Naive thymus-derived CD4-positive, alpha-beta T cell (primary cell): ENCODE measurements at regions of chr3 and their contacts with region 1.

Region 1: DNA sequence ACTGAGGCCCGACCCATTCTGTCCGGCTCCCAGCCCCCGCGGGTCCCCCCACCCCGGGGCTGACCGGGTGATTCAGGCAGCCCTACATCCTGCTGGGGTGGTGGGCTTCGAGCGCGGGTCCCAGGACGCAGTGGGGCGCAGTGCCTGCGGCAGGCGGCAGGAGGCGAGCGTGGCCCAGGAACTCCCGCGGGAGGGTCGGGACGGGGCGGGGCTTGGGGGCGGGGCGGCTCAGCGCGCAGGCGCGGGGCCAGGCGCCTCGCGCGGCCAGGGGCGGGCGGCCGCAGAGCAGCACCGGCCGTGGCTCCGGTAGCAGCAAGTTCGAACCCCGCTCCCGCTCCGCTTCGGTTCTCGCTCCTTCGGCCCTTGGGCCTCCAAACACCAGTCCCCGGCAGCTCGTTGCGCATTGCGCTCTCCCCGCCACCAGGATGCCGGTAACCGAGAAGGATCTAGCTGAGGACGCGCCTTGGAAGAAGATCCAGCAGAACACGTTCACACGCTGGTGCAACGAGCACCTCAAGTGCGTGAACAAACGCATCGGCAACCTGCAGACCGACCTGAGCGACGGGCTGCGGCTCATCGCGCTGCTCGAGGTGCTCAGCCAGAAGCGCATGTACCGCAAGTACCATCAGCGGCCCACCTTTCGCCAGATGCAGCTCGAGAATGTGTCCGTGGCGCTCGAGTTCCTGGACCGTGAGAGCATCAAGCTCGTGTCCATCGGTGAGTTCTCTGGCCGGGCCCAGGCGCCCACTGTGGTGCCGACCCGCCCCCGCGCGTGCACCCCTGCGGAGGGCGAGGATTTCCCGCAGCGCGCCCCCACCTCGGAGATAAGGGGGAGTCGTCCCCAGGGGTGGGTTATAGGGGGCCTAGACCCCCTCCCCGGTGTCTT is at the start of gene FLNB:
- DNase-seq: peak; percentile 61 to 83 (median 77)
- ATAC-seq: peak; percentile 95
- H3K4me3 ChIP-seq: peak within 1 kb of the TSS; percentile 100
- H3K4me3 Mint-ChIP-seq: peak within 1 kb of the TSS; percentile 78 to 93 (median 90)
- H3K27ac ChIP-seq: peak within 1 kb of the TSS; percentile 66
- H3K27ac Mint-ChIP-seq: peak within 1 kb of the TSS; percentile 61 to 95 (median 81)
- H3K4me1 ChIP-seq: peaks cover 9 to 32% of the 10 kb centered on the region in 2 donors
- H3K4me1 Mint-ChIP-seq: peaks cover 30 to 42% (median 41%) of the 10 kb centered on the region in 7 donors
- H3K27me3 ChIP-seq: no peaks in the 10 kb centered on the region
- H3K27me3 Mint-ChIP-seq: no peaks in the 10 kb centered on the region
- total RNA-seq, gene FLNB: 39.3 to 66.7 (median 64.9) TPM

Region 2: GRCh38 chr3:58034738-58035523 is 26.5 kb after region 1 on chr3:
- CTCF ChIA-PET with region 1: interaction called, 5 read pairs
- POLR2A ChIA-PET with region 1: no interaction called
- intact Hi-C with region 1: loop called in 1 of 2 experiments (anchors 1 kb)
- DNase-seq: peak in 8 of 9 donors; percentile 41 to 83 (median 69)
- ATAC-seq: peak; percentile 95
- H3K4me3 ChIP-seq: no peak overlapping the region
- H3K4me3 Mint-ChIP-seq: peak overlapping the region; percentile 13 to 74 (median 50)
- H3K27ac ChIP-seq: peak overlapping the region; percentile 48
- H3K27ac Mint-ChIP-seq: peak overlapping the region; percentile 31 to 98 (median 93)
- H3K4me1 ChIP-seq: peaks cover 14 to 15% of the 10 kb centered on the region in 2 donors
- H3K4me1 Mint-ChIP-seq: peaks cover 27 to 84% (median 62%) of the 10 kb centered on the region in 7 donors
- H3K27me3 ChIP-seq: no peaks in the 10 kb centered on the region
- H3K27me3 Mint-ChIP-seq: peaks cover 0 to 2% (median 0%) of the 10 kb centered on the region in 5 donors

Region 3: GRCh38 chr3:58116161-58116955 is 108.0 kb after region 1 on chr3:
- CTCF ChIA-PET with region 1: no interaction called
- POLR2A ChIA-PET with region 1: interaction called, 3 read pairs
- intact Hi-C with region 1: loop called (anchors 1 kb)
- DNase-seq: peak; percentile 20 to 85 (median 72)
- ATAC-seq: peak; percentile 95
- H3K4me3 ChIP-seq: no peak overlapping the region
- H3K4me3 Mint-ChIP-seq: peak overlapping the region; percentile 36 to 72 (median 62)
- H3K27ac ChIP-seq: peak overlapping the region; percentile 46
- H3K27ac Mint-ChIP-seq: peak overlapping the region; percentile 63 to 91 (median 83)
- H3K4me1 ChIP-seq: peaks cover 27 to 28% of the 10 kb centered on the region in 2 donors
- H3K4me1 Mint-ChIP-seq: peaks cover 12 to 45% (median 37%) of the 10 kb centered on the region in 7 donors
- H3K27me3 ChIP-seq: no peaks in the 10 kb centered on the region
- H3K27me3 Mint-ChIP-seq: no peaks in the 10 kb centered on the region

Region 4: GRCh38 chr3:58177747-58178527 is 169.6 kb after region 1 on chr3:
- CTCF ChIA-PET with region 1: interaction called, 22 read pairs
- POLR2A ChIA-PET with region 1: interaction called, 3 read pairs
- intact Hi-C with region 1: loop called (anchors 1 kb)
- DNase-seq: peak; percentile 72 to 92 (median 84)
- ATAC-seq: peak; percentile 94
- H3K4me3 ChIP-seq: peak overlapping the region; percentile 49
- H3K4me3 Mint-ChIP-seq: peak overlapping the region; percentile 51 to 84 (median 74)
- H3K27ac ChIP-seq: no peak overlapping the region
- H3K27ac Mint-ChIP-seq: peak overlapping the region in 3 of 9 donors; percentile 18 to 43 (median 29)
- H3K4me1 ChIP-seq: peaks cover 6 to 8% of the 10 kb centered on the region in 2 donors
- H3K4me1 Mint-ChIP-seq: peaks cover 4 to 17% (median 13%) of the 10 kb centered on the region in 7 donors
- H3K27me3 ChIP-seq: no peaks in the 10 kb centered on the region
- H3K27me3 Mint-ChIP-seq: peaks cover 0 to 4% (median 0%) of the 10 kb centered on the region in 5 donors

Region 5: GRCh38 chr3:58192069-58192468 is 183.7 kb after region 1 on chr3:
- CTCF ChIA-PET with region 1: no interaction called
- POLR2A ChIA-PET with region 1: no interaction called
- intact Hi-C with region 1: no loop called
- DNase-seq: no peak
- ATAC-seq: no peak
- H3K4me3 ChIP-seq: no peak overlapping the region
- H3K4me3 Mint-ChIP-seq: no peak overlapping the region
- H3K27ac ChIP-seq: no peak overlapping the region
- H3K27ac Mint-ChIP-seq: no peak overlapping the region
- H3K4me1 ChIP-seq: no peaks in the 10 kb centered on the region
- H3K4me1 Mint-ChIP-seq: peaks cover 0 to 3% (median 0%) of the 10 kb centered on the region in 7 donors
- H3K27me3 ChIP-seq: no peaks in the 10 kb centered on the region
- H3K27me3 Mint-ChIP-seq: no peaks in the 10 kb centered on the region

Region 6: GRCh38 chr3:58237238-58237940 is 229.0 kb after region 1 on chr3 and contains the start of gene ABHD6:
- CTCF ChIA-PET with region 1: interaction called, 3 read pairs
- POLR2A ChIA-PET with region 1: no interaction called
- intact Hi-C with region 1: loop called (anchors 1 to 5 kb)
- DNase-seq: peak; percentile 58 to 95 (median 86)
- ATAC-seq: peak; percentile 91
- H3K4me3 ChIP-seq: peak within 1 kb of the TSS; percentile 86
- H3K4me3 Mint-ChIP-seq: peak within 1 kb of the TSS; percentile 84 to 98 (median 92)
- H3K27ac ChIP-seq: peak within 1 kb of the TSS; percentile 72
- H3K27ac Mint-ChIP-seq: peak within 1 kb of the TSS; percentile 50 to 87 (median 81)
- H3K4me1 ChIP-seq: peaks cover 6 to 12% of the 10 kb centered on the region in 2 donors
- H3K4me1 Mint-ChIP-seq: peaks cover 9 to 18% (median 13%) of the 10 kb centered on the region in 7 donors
- H3K27me3 ChIP-seq: no peaks in the 10 kb centered on the region
- H3K27me3 Mint-ChIP-seq: peaks cover 0 to 29% (median 13%) of the 10 kb centered on the region in 5 donors
- total RNA-seq, gene ABHD6: 3.1 to 7.3 (median 6.6) TPM